ENCODE measurements at regions of chr5 and their contacts with region 1.

Region 1: GRCh38 chr5:35830587-35830986 is 26.1 kb upstream of the IL7R start:
- DNase-seq: peak in 4 of 9 experiments; percentile 22 to 82 (median 72)
- ATAC-seq: peak; percentile 78
- H3K4me3 ChIP-seq: no peak overlapping the region
- H3K4me3 Mint-ChIP-seq: peak overlapping the region; percentile 63
- H3K27ac ChIP-seq: peak overlapping the region; percentile 1 to 43
- H3K27ac Mint-ChIP-seq: peak overlapping the region; percentile 90
- H3K4me1 ChIP-seq: peaks cover 86% of the 10 kb centered on the region
- H3K4me1 Mint-ChIP-seq: peaks cover 91% of the 10 kb centered on the region
- H3K27me3 ChIP-seq: no peaks in the 10 kb centered on the region
- H3K27me3 Mint-ChIP-seq: no peaks in the 10 kb centered on the region
- CTCF ChIP-seq: no peak

Region 2: DNA sequence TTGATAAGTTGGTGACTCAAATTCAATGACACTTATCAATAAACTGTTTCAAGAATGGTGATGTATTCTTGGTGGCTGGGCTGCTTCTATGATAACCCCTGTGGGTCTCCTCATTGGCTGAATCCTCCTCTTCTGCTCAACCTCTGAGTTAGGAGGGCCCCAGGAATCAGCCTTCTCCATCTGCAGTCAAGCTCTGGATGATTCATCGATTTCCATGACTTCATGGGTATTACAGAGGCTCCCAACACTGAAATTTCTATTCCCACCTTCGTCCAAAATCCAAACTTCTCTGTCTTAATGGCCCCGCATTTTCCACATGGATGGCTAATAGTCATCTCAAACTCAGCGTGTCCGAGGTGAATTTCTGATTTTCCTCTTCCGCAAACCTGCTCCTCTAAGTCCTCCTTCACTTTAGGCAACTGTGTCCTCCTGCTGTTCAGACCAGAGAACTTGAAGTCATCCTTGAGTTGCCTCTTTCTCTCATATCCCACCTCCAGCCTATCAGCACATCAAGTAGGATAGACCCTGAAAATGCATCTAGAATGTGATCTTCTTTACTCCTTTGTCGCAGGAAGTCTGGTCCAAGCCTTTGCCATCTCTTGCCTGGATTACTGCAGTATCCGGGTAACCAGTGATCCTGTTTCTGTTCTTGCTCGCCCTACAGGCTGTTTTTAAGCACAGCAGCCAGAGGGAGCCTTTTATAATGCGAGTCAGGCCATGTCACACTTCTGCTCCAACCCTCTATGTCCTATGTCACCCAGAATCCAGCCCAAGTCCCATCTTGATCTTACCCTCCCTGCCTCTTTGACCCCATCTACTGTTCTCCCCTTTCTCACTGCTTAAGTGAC is 15.3 kb before region 1 on chr5:
- CTCF ChIA-PET with region 1: interaction called, 3 read pairs
- POLR2A ChIA-PET with region 1: interaction called, 48 read pairs
- intact Hi-C with region 1: loop called (anchors 1 to 2 kb)
- DNase-seq: peak in 3 of 9 experiments; percentile 30 to 62 (median 52)
- ATAC-seq: no peak
- H3K4me3 ChIP-seq: no peak overlapping the region
- H3K4me3 Mint-ChIP-seq: no peak overlapping the region
- H3K27ac ChIP-seq: peak overlapping the region in 1 of 2 experiments; percentile 15
- H3K27ac Mint-ChIP-seq: no peak overlapping the region
- H3K4me1 ChIP-seq: peaks cover 69% of the 10 kb centered on the region
- H3K4me1 Mint-ChIP-seq: peaks cover 53% of the 10 kb centered on the region
- H3K27me3 ChIP-seq: no peaks in the 10 kb centered on the region
- H3K27me3 Mint-ChIP-seq: no peaks in the 10 kb centered on the region
- CTCF ChIP-seq: peak; percentile 31

Region 3: DNA sequence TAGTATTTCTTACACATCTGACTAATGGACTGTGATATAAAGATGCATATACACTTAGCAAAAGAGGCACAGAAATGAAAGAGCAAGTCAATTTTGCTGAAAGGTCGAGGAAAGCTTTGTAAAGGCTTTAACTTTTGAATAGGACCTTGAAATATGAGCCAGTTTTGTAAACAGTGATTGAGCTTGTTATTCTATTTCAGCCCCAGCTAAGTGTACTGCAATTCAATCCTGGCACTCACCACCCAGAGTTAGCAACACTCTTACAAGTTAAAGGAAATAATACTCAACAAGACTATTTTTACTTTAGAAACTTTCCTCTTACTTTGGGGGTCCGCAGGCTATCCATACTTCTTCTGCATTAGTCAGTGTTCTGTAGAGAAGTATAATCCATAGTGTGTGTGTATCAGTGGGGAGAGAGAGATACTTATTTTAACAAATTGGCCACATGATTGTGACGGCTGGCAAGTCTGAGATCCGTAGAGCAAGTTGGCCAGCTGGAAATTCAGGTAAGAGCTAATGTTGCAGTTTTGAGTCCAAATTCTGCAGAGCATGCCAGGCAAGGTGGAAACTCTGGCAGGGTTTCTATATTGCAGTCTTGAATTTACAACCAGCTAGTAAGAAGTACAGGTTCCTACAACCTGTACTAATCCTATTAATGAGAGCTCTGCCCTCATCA is 59.6 kb after region 1 on chr5:
- CTCF ChIA-PET with region 1: no interaction called
- POLR2A ChIA-PET with region 1: no interaction called
- intact Hi-C with region 1: no loop called
- DNase-seq: no peak
- ATAC-seq: no peak
- H3K4me3 ChIP-seq: no peak overlapping the region
- H3K4me3 Mint-ChIP-seq: no peak overlapping the region
- H3K27ac ChIP-seq: no peak overlapping the region
- H3K27ac Mint-ChIP-seq: no peak overlapping the region
- H3K4me1 ChIP-seq: no peaks in the 10 kb centered on the region
- H3K4me1 Mint-ChIP-seq: no peaks in the 10 kb centered on the region
- H3K27me3 ChIP-seq: no peaks in the 10 kb centered on the region
- H3K27me3 Mint-ChIP-seq: no peaks in the 10 kb centered on the region
- CTCF ChIP-seq: no peak